ENCODE measurements at regions of chr18 and their contacts with region 1.

Region 1: DNA sequence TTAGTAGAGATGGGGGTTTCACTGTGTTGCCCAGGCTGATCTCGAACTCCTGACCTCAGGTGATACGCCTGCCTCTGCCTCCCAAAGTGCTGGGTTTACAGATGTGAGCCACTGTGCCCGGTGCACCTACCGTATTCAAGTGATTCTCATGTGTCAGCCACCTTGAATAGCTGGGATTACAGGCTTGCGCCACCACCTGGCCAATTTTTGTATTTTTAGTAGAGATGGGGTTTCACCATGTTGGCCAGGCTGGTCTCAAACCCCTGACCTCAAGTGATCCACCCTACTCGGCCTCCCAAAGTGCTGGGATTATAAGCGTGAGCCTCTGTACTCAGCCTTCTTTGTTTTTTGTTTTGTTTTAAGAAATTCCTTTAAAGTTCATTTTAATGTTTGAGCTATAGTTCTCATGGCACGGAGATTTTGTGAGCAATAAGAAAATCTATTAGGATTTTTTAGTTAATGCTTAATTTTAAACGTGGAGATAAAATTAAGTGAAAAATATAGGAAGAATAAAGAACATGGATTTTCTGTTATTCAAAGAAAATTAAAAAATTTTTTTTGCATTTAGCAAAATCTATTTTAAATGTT is 242.6 kb downstream of the PHLPP1 start:
- DNase-seq: peak in 5 of 9 experiments; percentile 20 to 60 (median 36)
- ATAC-seq: peak; percentile 48
- H3K4me3 ChIP-seq: no peak overlapping the region
- H3K4me3 Mint-ChIP-seq: no peak overlapping the region
- H3K27ac ChIP-seq: no peak overlapping the region
- H3K27ac Mint-ChIP-seq: no peak overlapping the region
- H3K4me1 ChIP-seq: peaks cover 10% of the 10 kb centered on the region
- H3K4me1 Mint-ChIP-seq: peaks cover 13% of the 10 kb centered on the region
- H3K27me3 ChIP-seq: no peaks in the 10 kb centered on the region
- H3K27me3 Mint-ChIP-seq: no peaks in the 10 kb centered on the region
- CTCF ChIP-seq: peak; percentile 34

Region 2: GRCh38 chr18:62933261-62933887 is 24.6 kb before region 1 on chr18:
- CTCF ChIA-PET with region 1: interaction called, 3 read pairs
- POLR2A ChIA-PET with region 1: interaction called, 4 read pairs
- intact Hi-C with region 1: loop called in 1 of 2 experiments (anchors 1 kb)
- DNase-seq: no peak
- ATAC-seq: no peak
- H3K4me3 ChIP-seq: no peak overlapping the region
- H3K4me3 Mint-ChIP-seq: no peak overlapping the region
- H3K27ac ChIP-seq: no peak overlapping the region
- H3K27ac Mint-ChIP-seq: no peak overlapping the region
- H3K4me1 ChIP-seq: no peaks in the 10 kb centered on the region
- H3K4me1 Mint-ChIP-seq: peaks cover under 1% of the 10 kb centered on the region
- H3K27me3 ChIP-seq: no peaks in the 10 kb centered on the region
- H3K27me3 Mint-ChIP-seq: no peaks in the 10 kb centered on the region
- CTCF ChIP-seq: no peak

Measured in CD8-positive, alpha-beta T cell (primary cell).